ENCODE measurements at regions of chr9 and their contacts with region 1.

Region 1: DNA sequence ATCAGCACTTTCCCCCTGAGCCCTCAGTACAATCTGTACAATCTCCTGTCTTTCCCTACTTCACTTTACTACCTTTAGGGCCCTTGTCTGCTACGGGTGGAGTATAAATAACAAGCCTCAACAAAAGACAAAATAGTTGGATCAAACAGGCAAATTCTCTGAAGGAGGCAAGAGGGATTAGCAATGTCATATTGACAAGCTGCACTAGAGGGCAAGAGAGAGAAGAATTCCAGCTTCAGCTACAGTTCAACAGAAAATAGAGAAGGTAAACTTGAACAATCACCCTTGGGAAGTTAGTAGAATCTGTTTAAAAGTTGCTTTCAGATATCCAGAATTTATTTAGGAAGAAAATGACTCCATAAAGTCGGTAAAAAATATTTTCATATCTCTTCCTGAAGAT is 68.4 kb upstream of the IZUMO3 start:
- DNase-seq: no peak
- ATAC-seq: no peak
- H3K4me3 ChIP-seq: no peak overlapping the region
- H3K27ac ChIP-seq: no peak overlapping the region
- H3K4me1 ChIP-seq: no peaks in the 10 kb centered on the region
- H3K27me3 ChIP-seq: no peaks in the 10 kb centered on the region
- CTCF ChIP-seq: no peak
- POLR2A ChIP-seq: no peak

Region 2: GRCh38 chr9:24552526-24553182 is 61.4 kb before region 1 on chr9:
- intact Hi-C with region 1: loop called in 1 of 10 experiments (anchors 10 kb)
- DNase-seq: no peak
- ATAC-seq: no peak
- H3K4me3 ChIP-seq: no peak overlapping the region
- H3K27ac ChIP-seq: no peak overlapping the region
- H3K4me1 ChIP-seq: no peaks in the 10 kb centered on the region
- H3K27me3 ChIP-seq: no peaks in the 10 kb centered on the region
- CTCF ChIP-seq: no peak
- POLR2A ChIP-seq: no peak

Region 3: DNA sequence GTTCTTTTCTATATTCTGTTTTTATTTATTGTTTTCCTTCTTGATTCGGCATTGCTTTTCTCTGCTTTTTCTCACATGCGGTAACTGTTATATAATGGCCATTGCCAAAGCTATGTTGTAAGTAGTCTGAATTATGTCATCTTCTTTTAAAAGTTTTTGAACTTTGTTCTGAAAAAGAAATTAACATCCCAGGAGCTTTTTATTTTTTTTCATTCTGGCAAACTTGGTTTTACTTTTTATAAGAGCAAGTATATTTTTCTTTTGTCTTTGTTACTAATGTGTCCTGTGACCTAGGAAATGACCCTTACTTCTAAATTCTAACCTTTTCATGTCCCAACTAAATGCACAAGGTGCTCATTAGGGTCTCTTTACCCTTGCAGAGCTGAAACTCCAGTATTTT is 41.7 kb before region 1 on chr9:
- intact Hi-C with region 1: no loop called
- DNase-seq: no peak
- ATAC-seq: no peak
- H3K4me3 ChIP-seq: no peak overlapping the region
- H3K27ac ChIP-seq: no peak overlapping the region
- H3K4me1 ChIP-seq: no peaks in the 10 kb centered on the region
- H3K27me3 ChIP-seq: no peaks in the 10 kb centered on the region
- CTCF ChIP-seq: no peak
- POLR2A ChIP-seq: no peak

Region 4: GRCh38 chr9:24672336-24672735 is 58.3 kb after region 1 on chr9:
- intact Hi-C with region 1: no loop called
- DNase-seq: no peak
- ATAC-seq: no peak
- H3K4me3 ChIP-seq: no peak overlapping the region
- H3K27ac ChIP-seq: no peak overlapping the region
- H3K4me1 ChIP-seq: no peaks in the 10 kb centered on the region
- H3K27me3 ChIP-seq: no peaks in the 10 kb centered on the region
- CTCF ChIP-seq: no peak
- POLR2A ChIP-seq: no peak

Region 5: DNA sequence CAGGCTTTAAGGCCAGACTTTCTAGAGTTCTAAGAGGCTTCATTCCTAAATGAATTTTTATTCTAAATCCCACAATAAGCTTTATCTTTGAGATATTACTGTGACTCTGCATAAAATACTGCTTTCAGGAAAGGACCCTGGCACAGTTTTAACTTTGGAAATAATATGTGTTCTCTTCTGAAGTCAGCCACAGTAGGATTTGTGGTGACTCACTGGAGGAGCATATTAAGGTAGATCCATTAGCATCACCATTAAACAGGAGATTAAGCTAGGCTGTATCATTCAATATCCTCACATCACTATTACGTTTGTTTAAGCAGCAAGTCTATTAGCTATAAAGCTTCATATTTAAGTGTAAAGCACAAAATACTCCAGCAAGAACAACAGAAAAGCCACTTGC is 117.7 kb after region 1 on chr9:
- intact Hi-C with region 1: no loop called
- DNase-seq: no peak
- ATAC-seq: no peak
- H3K4me3 ChIP-seq: no peak overlapping the region
- H3K27ac ChIP-seq: no peak overlapping the region
- H3K4me1 ChIP-seq: no peaks in the 10 kb centered on the region
- H3K27me3 ChIP-seq: no peaks in the 10 kb centered on the region
- CTCF ChIP-seq: no peak
- POLR2A ChIP-seq: no peak

Measured in heart left ventricle (tissue), 16 donors.